ENCODE measurements at regions of chr20 and their contacts with region 1.

Region 1: DNA sequence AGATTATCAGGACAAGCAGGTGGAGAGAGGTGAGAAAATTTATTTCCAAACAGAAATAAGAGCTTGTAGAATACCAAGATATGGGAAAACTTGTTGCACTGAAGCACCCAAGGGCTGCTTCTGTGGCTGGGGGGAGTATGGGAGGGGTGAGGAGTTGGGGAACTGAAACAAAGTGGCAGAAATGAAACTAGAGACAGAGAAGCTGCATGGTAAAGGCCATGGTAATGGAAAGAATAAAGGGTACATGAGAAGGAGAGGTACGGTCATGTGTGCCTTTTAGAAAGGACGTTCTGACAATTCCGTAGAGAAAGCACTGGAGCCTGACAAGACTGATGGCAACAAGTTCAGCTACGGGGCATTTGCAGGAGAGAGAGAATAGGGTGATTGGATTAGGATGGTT is 51.6 kb upstream of the RIN2 start:
- DNase-seq: no peak
- CTCF ChIP-seq: no peak

Region 2: GRCh38 chr20:19317237-19318069 is 389.0 kb before region 1 on chr20:
- CTCF ChIA-PET with region 1: no interaction called
- POLR2A ChIA-PET with region 1: no interaction called
- DNase-seq: peak; percentile 38
- CTCF ChIP-seq: no peak

Region 3: DNA sequence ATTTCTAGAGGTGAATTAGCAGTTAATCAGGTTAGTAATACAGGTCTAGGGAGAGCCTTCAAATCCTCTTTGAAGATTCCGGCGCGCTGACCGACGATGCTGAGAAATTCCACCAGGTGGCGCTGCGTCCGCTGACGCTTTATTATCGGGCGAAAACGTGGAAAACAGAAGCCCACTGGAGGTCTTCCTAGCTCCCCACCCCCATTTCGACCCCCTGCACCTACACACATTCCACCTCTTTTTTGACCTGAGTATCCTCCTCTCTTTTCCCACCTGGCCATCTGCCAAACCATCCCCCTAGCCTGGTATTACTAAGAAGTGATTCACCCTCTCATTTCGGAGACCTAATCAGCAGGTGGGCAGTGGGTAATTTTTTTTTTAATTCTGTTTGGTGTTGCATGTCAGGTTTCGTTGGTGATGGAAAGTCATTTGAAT is 13.8 kb before region 1 on chr20:
- CTCF ChIA-PET with region 1: interaction called, 57 read pairs
- POLR2A ChIA-PET with region 1: no interaction called
- DNase-seq: peak; percentile 56
- CTCF ChIP-seq: peak; percentile 84